ENCODE measurements at regions of chr19 and their contacts with region 1.

Region 1: GRCh38 chr19:2236314-2237050 is at the starts of genes PLEKHJ1 and SF3A2:
- DNase-seq: peak; percentile 97 to 100 (median 97)
- H3K4me3 ChIP-seq: peak within 1 kb of the TSS; percentile 92
- H3K27ac ChIP-seq: peak within 1 kb of the TSS; percentile 92 to 100
- H3K4me1 ChIP-seq: peaks cover 26% of the 10 kb centered on the region
- H3K27me3 ChIP-seq: no peaks in the 10 kb centered on the region
- CTCF ChIP-seq: peak; percentile 95 to 100 (median 100)
- EP300 ChIP-seq: peak; percentile 46
- POLR2A ChIP-seq: peak; percentile 81
- total RNA-seq, gene PLEKHJ1: 39.0 to 55.2 (median 46.8) TPM
- total RNA-seq, gene SF3A2: 33.0 to 137 (median 89.8) TPM

Region 2: GRCh38 chr19:2168619-2169424 is 67.7 kb before region 1 on chr19:
- intact Hi-C with region 1: loop called in 2 of 4 experiments (anchors 5 to 10 kb)
- DNase-seq: peak; percentile 91 to 95 (median 94)
- H3K4me3 ChIP-seq: no peak overlapping the region
- H3K27ac ChIP-seq: peak overlapping the region; percentile 9 to 61
- H3K4me1 ChIP-seq: peaks cover 41% of the 10 kb centered on the region
- H3K27me3 ChIP-seq: no peaks in the 10 kb centered on the region
- CTCF ChIP-seq: no peak
- EP300 ChIP-seq: peak; percentile 29
- POLR2A ChIP-seq: no peak

Region 3: GRCh38 chr19:2391118-2391725 is 154.7 kb after region 1 on chr19:
- intact Hi-C with region 1: loop called in 1 of 4 experiments (anchors 5 kb)
- DNase-seq: peak in 1 of 5 donors; percentile 56
- H3K4me3 ChIP-seq: no peak overlapping the region
- H3K27ac ChIP-seq: no peak overlapping the region
- H3K4me1 ChIP-seq: no peaks in the 10 kb centered on the region
- H3K27me3 ChIP-seq: no peaks in the 10 kb centered on the region
- CTCF ChIP-seq: peak; percentile 52 to 68 (median 64)
- EP300 ChIP-seq: no peak
- POLR2A ChIP-seq: no peak

Region 4: DNA sequence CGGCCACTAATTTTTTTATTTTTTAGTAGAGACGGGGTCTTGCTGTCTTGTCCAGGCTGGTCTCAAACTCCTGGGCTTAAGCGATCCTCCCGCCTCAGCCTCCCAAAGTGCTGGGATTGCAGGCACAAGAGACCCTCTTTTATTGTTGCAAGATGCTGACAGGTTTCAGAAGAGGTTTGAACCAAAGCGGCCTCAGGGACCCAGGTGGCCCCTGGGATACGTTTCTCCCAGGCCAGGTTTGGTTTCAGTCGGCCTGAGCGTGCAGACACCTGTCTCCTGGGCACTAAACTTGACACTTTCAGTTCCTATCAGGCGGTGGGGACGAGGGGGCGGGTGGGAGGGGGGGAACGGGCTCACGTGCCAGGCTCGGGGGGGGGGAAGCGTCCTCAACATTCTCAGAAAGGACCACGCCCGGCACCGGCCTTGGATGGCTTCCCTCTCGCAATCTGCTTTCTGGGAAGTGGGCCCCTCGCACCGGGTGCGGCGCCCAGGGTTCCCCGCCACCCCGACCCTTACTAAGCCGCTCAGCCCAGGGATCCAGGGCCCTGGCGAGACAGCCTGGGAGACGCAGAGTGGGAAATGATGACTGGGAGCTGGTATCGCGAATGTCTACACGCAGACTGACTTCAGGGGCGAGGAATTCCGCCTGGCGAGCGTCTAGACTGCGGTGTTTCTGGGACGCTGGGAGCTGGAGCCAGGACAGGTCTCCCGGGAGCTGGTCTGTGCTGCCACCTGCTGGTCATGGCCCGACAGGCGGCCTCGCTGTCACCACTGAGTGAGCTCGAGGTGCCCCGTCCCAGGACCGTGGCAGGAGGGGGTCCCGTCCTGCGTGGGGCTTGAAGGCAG is 374.4 kb after region 1 on chr19:
- intact Hi-C with region 1: loop called in 1 of 4 experiments (anchors 10 kb)
- DNase-seq: peak; percentile 91 to 97 (median 95)
- H3K4me3 ChIP-seq: peak overlapping the region; percentile 44
- H3K27ac ChIP-seq: peak overlapping the region in 1 of 2 donors; percentile 48
- H3K4me1 ChIP-seq: no peaks in the 10 kb centered on the region
- H3K27me3 ChIP-seq: no peaks in the 10 kb centered on the region
- CTCF ChIP-seq: peak; percentile 90 to 99 (median 97)
- EP300 ChIP-seq: peak; percentile 61
- POLR2A ChIP-seq: peak; percentile 44